ENCODE measurements at regions of chr1 and their contacts with region 1.

Region 1: DNA sequence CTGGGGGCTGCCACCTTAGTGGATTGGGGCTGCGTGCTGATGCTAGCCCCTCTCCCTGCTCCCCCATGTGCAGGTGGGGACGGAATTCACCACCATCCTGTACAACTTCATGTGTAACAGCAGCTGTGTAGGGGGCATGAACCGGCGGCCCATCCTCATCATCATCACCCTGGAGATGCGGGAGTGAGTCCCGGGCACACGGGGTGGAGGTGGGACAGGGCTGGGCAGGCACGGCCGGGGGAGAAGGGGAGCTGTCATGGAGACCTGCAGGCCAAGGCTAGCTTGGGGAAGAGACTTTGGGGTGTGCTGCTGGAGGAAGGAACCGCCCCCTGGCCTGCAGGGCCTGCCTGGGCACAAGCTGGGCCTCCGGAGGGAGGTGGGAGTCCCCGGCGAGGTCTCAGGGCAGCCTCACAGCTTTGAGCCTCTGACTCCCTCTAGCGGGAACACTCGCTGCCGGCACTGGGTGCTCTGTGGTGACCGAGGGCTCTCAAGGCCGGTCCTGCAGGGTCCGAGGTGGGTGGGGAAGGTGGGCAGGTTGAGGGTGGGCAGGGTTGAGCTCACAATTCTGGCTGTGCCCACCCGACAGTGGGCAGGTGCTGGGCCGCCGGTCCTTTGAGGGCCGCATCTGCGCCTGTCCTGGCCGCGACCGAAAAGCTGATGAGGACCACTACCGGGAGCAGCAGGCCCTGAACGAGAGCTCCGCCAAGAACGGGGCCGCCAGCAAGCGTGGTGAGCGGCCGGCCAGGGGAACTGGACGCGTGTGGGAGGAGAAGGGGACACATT is 25.0 kb upstream of the CCDC27 start:
- DNase-seq: peak in 1 of 14 experiments; percentile 16
- ATAC-seq: no peak
- H3K4me3 ChIP-seq: no peak overlapping the region
- H3K4me3 Mint-ChIP-seq: no peak overlapping the region
- H3K27ac ChIP-seq: no peak overlapping the region
- H3K27ac Mint-ChIP-seq: no peak overlapping the region
- H3K4me1 ChIP-seq: peaks cover 2% of the 10 kb centered on the region
- H3K4me1 Mint-ChIP-seq: peaks cover 5% of the 10 kb centered on the region
- H3K27me3 ChIP-seq: no peaks in the 10 kb centered on the region
- H3K27me3 Mint-ChIP-seq: peaks cover 16% of the 10 kb centered on the region
- CTCF ChIP-seq: no peak

Region 2: DNA sequence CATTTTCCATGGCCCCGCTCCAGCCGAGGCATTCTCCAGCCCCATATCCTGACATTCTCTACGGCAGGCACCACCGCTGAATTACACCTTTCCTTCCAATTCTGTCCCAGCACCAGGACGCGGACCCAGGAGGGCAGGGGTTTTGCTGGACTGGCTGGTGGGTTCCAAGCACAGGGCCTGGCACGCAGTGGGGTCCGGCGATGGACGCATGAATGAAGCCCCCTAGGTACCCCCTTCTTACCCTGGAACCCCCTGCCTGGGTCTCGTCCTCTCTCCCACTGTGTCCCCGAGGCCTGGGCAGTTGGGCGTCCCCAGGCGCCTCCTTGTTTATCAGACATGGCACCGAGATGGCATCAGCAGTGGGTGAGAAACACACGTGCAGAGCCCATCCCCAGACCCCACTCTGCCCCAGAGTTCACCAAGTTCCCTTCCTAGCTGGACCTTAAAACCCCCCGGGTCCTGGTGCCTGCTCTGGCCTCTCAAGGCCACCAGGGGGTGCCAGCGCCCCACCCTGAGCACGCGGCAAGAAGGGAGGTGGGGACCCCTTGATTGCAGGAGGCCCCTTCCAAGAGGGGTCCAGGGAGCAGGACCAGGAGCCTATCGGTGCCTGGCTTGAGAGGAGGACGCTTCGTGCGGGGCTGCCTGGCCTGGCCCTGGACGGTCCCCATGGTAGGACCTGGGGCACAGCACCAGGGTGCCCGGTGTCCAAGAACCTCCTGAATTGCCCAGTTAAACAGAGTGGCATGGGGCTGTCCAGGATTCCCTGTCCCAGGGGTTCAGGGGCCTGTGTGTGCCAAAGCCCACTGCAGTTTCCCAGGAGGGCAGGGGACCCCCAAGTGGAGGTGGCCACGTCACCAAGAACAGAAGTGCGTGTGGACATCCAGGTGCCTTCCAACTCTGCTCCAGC is 162.1 kb before region 1 on chr1:
- CTCF ChIA-PET with region 1: no interaction called
- POLR2A ChIA-PET with region 1: no interaction called
- intact Hi-C with region 1: loop called in 1 of 2 experiments (anchors 1 kb)
- DNase-seq: peak in 12 of 14 experiments; percentile 10 to 69 (median 29)
- ATAC-seq: peak; percentile 72
- H3K4me3 ChIP-seq: no peak overlapping the region
- H3K4me3 Mint-ChIP-seq: no peak overlapping the region
- H3K27ac ChIP-seq: no peak overlapping the region
- H3K27ac Mint-ChIP-seq: no peak overlapping the region
- H3K4me1 ChIP-seq: no peaks in the 10 kb centered on the region
- H3K4me1 Mint-ChIP-seq: no peaks in the 10 kb centered on the region
- H3K27me3 ChIP-seq: no peaks in the 10 kb centered on the region
- H3K27me3 Mint-ChIP-seq: no peaks in the 10 kb centered on the region
- CTCF ChIP-seq: peak; percentile 77

Region 3: GRCh38 chr1:3695326-3696217 is 31.7 kb before region 1 on chr1:
- CTCF ChIA-PET with region 1: no interaction called
- POLR2A ChIA-PET with region 1: no interaction called
- intact Hi-C with region 1: loop called (anchors 1 kb)
- DNase-seq: peak in 12 of 14 experiments; percentile 11 to 51 (median 24)
- ATAC-seq: peak; percentile 68
- H3K4me3 ChIP-seq: peak overlapping the region; percentile 7
- H3K4me3 Mint-ChIP-seq: peak overlapping the region; percentile 48
- H3K27ac ChIP-seq: no peak overlapping the region
- H3K27ac Mint-ChIP-seq: no peak overlapping the region
- H3K4me1 ChIP-seq: peaks cover 8% of the 10 kb centered on the region
- H3K4me1 Mint-ChIP-seq: peaks cover 4% of the 10 kb centered on the region
- H3K27me3 ChIP-seq: peaks cover 0 to 7% of the 10 kb centered on the region in 2 experiments
- H3K27me3 Mint-ChIP-seq: peaks cover 9% of the 10 kb centered on the region
- CTCF ChIP-seq: peak; percentile 60